ENCODE measurements at regions of chr12 and their contacts with region 1.

Region 1: GRCh38 chr12:3299929-3300832 is 190.8 kb upstream of the PRMT8 start:
- DNase-seq: peak; percentile 50 to 82 (median 73)
- ATAC-seq: peak; percentile 78 to 87 (median 80)
- H3K4me3 ChIP-seq: peak overlapping the region; percentile 10 to 36
- H3K4me3 Mint-ChIP-seq: peak overlapping the region; percentile 67 to 72 (median 67)
- H3K27ac ChIP-seq: no peak overlapping the region
- H3K27ac Mint-ChIP-seq: peak overlapping the region; percentile 39 to 60
- H3K4me1 ChIP-seq: peaks cover 0 to 14% of the 10 kb centered on the region in 2 experiments
- H3K4me1 Mint-ChIP-seq: peaks cover 12 to 13% (median 12%) of the 10 kb centered on the region in 3 donors
- H3K27me3 ChIP-seq: peaks cover 0 to 56% of the 10 kb centered on the region in 2 experiments
- H3K27me3 Mint-ChIP-seq: peaks cover 8 to 24% of the 10 kb centered on the region in 2 donors

Region 2: GRCh38 chr12:3342056-3342455 is 41.9 kb after region 1 on chr12:
- CTCF ChIA-PET with region 1: no interaction called
- POLR2A ChIA-PET with region 1: no interaction called
- DNase-seq: peak in 1 of 35 experiments; percentile 9
- ATAC-seq: no peak
- H3K4me3 ChIP-seq: no peak overlapping the region
- H3K4me3 Mint-ChIP-seq: no peak overlapping the region
- H3K27ac ChIP-seq: no peak overlapping the region
- H3K27ac Mint-ChIP-seq: no peak overlapping the region
- H3K4me1 ChIP-seq: no peaks in the 10 kb centered on the region
- H3K4me1 Mint-ChIP-seq: no peaks in the 10 kb centered on the region
- H3K27me3 ChIP-seq: peaks cover 0 to 27% of the 10 kb centered on the region in 2 experiments
- H3K27me3 Mint-ChIP-seq: peaks cover 17 to 50% of the 10 kb centered on the region in 2 donors

Region 3: DNA sequence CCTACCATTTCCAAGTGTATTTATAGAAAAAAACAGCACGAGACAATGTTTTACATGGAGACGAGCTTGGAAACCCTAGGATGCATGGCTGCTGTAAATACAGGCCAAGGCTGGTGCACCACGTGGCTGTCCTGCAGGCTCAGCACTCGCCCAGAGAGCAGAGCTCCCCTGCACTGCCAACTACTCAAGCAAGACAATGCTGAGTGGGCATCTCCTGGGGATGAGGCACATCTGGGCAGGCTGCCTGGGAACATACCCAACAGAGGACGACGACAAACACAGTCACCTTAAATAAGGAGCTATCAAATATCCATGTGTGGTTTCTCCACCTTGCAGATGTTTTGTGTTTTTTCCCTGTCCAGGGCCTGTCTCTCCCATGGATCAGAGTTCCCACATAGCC is 62.6 kb after region 1 on chr12:
- CTCF ChIA-PET with region 1: no interaction called
- POLR2A ChIA-PET with region 1: no interaction called
- DNase-seq: no peak
- ATAC-seq: no peak
- H3K4me3 ChIP-seq: no peak overlapping the region
- H3K4me3 Mint-ChIP-seq: no peak overlapping the region
- H3K27ac ChIP-seq: no peak overlapping the region
- H3K27ac Mint-ChIP-seq: no peak overlapping the region
- H3K4me1 ChIP-seq: no peaks in the 10 kb centered on the region
- H3K4me1 Mint-ChIP-seq: peaks cover 2 to 6% (median 3%) of the 10 kb centered on the region in 3 donors
- H3K27me3 ChIP-seq: peaks cover 3 to 48% of the 10 kb centered on the region in 2 experiments
- H3K27me3 Mint-ChIP-seq: peaks cover 17 to 28% of the 10 kb centered on the region in 2 donors

Region 4: DNA sequence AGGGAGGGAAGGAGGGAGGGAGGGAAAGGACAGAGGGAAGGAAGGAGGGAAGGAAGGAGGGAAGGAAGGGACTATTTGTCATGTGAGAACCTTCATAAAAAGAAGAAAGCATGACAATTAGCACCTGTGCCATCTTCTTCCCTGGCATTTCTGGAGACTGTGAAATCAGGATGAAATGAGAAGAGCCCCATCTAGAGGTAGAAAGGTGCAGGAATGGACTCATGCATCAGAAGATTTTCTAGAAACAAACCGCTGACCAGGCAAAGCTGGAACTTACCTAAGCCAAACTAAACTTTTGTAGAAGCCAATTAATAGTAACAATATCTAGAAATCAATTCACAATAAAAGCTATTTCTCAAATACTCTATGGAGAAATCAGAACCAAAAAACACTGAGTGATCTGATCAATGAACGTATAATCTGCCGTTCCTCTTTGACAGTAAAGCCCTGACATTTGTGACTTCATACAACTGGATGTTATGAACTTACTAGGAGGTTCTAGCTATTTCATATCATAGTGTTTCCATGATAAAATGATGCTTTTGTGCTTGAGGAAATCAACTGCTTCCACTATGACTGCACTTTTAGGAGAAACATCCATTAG is 477.1 kb after region 1 on chr12:
- CTCF ChIA-PET with region 1: interaction called, 7 to 19 read pairs
- POLR2A ChIA-PET with region 1: no interaction called
- DNase-seq: peak in 4 of 35 experiments; percentile 3 to 65 (median 20)
- ATAC-seq: peak in 2 of 4 experiments; percentile 23 to 62
- H3K4me3 ChIP-seq: no peak overlapping the region
- H3K4me3 Mint-ChIP-seq: no peak overlapping the region
- H3K27ac ChIP-seq: no peak overlapping the region
- H3K27ac Mint-ChIP-seq: no peak overlapping the region
- H3K4me1 ChIP-seq: no peaks in the 10 kb centered on the region
- H3K4me1 Mint-ChIP-seq: peaks cover 3 to 5% (median 4%) of the 10 kb centered on the region in 3 donors
- H3K27me3 ChIP-seq: no peaks in the 10 kb centered on the region
- H3K27me3 Mint-ChIP-seq: no peaks in the 10 kb centered on the region

Region 5: GRCh38 chr12:3803865-3804472 is 503.8 kb after region 1 on chr12:
- CTCF ChIA-PET with region 1: interaction called, 50 to 51 read pairs
- POLR2A ChIA-PET with region 1: no interaction called
- DNase-seq: peak; percentile 27 to 83 (median 63)
- ATAC-seq: peak; percentile 64 to 91 (median 71)
- H3K4me3 ChIP-seq: no peak overlapping the region
- H3K4me3 Mint-ChIP-seq: no peak overlapping the region
- H3K27ac ChIP-seq: no peak overlapping the region
- H3K27ac Mint-ChIP-seq: no peak overlapping the region
- H3K4me1 ChIP-seq: no peaks in the 10 kb centered on the region
- H3K4me1 Mint-ChIP-seq: no peaks in the 10 kb centered on the region
- H3K27me3 ChIP-seq: no peaks in the 10 kb centered on the region
- H3K27me3 Mint-ChIP-seq: no peaks in the 10 kb centered on the region

Region 6: GRCh38 chr12:4056910-4057845 is 757.0 kb after region 1 on chr12:
- CTCF ChIA-PET with region 1: no interaction called
- POLR2A ChIA-PET with region 1: interaction called in 1 of 2 experiments, 10 read pairs
- DNase-seq: no peak
- ATAC-seq: no peak
- H3K4me3 ChIP-seq: no peak overlapping the region
- H3K4me3 Mint-ChIP-seq: peak overlapping the region in 2 of 3 donors; percentile 8 to 32
- H3K27ac ChIP-seq: no peak overlapping the region
- H3K27ac Mint-ChIP-seq: peak overlapping the region; percentile 14 to 36
- H3K4me1 ChIP-seq: no peaks in the 10 kb centered on the region
- H3K4me1 Mint-ChIP-seq: peaks cover 11 to 28% (median 14%) of the 10 kb centered on the region in 3 donors
- H3K27me3 ChIP-seq: no peaks in the 10 kb centered on the region
- H3K27me3 Mint-ChIP-seq: no peaks in the 10 kb centered on the region